ENCODE measurements at regions of chr2 and their contacts with region 1.

Region 1: GRCh38 chr2:222973237-222973636 is 78.8 kb upstream of the KCNE4 start:
- DNase-seq: no peak
- H3K4me3 ChIP-seq: no peak overlapping the region
- H3K27ac ChIP-seq: no peak overlapping the region
- H3K27me3 ChIP-seq: no peaks in the 10 kb centered on the region
- CTCF ChIP-seq: no peak

Region 2: DNA sequence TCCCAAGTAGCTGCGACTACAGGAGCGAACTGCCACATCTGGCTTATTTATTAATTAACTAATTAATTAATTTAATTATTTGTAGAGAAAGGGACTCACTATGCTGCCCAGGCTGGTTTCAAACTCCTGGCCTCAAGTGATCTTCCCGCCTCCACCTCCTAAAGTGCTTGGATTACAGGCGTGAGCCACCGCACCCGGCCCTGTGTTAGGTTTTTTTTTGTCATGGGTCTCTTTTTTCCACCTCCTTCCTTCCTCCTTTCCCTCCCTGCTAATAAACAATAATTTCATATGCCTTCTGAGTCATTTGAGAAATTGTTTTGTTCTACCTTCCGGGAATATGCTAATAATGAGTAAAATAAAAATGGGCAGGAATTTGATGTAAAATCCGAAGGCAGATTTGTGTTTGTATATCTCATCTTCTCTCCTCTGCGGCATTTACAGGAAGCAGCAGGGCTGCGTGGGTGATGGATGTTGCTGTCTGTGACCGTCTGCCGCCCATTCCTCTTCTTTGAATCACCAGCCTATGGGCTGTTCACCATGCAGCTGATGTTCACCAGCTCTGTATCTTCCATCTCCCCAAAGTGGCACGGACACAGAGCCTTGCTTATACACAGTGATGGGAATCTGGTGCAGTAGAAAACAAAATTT is 22.5 kb before region 1 on chr2:
- CTCF ChIA-PET with region 1: interaction called, 14 read pairs
- POLR2A ChIA-PET with region 1: no interaction called
- DNase-seq: peak; percentile 76
- H3K4me3 ChIP-seq: no peak overlapping the region
- H3K27ac ChIP-seq: peak overlapping the region; percentile 75
- H3K27me3 ChIP-seq: no peaks in the 10 kb centered on the region
- CTCF ChIP-seq: no peak

Region 3: GRCh38 chr2:223051693-223052289 is 78.6 kb after region 1 on chr2 and contains the start of gene KCNE4:
- CTCF ChIA-PET with region 1: interaction called, 18 read pairs
- POLR2A ChIA-PET with region 1: interaction called, 5 read pairs
- DNase-seq: no peak
- H3K4me3 ChIP-seq: peak within 1 kb of the TSS; percentile 73
- H3K27ac ChIP-seq: peak within 1 kb of the TSS; percentile 68
- H3K27me3 ChIP-seq: no peaks in the 10 kb centered on the region
- CTCF ChIP-seq: no peak
- polyA plus RNA-seq, gene KCNE4: 10.6 and 12.5 TPM in 2 replicates

Region 4: DNA sequence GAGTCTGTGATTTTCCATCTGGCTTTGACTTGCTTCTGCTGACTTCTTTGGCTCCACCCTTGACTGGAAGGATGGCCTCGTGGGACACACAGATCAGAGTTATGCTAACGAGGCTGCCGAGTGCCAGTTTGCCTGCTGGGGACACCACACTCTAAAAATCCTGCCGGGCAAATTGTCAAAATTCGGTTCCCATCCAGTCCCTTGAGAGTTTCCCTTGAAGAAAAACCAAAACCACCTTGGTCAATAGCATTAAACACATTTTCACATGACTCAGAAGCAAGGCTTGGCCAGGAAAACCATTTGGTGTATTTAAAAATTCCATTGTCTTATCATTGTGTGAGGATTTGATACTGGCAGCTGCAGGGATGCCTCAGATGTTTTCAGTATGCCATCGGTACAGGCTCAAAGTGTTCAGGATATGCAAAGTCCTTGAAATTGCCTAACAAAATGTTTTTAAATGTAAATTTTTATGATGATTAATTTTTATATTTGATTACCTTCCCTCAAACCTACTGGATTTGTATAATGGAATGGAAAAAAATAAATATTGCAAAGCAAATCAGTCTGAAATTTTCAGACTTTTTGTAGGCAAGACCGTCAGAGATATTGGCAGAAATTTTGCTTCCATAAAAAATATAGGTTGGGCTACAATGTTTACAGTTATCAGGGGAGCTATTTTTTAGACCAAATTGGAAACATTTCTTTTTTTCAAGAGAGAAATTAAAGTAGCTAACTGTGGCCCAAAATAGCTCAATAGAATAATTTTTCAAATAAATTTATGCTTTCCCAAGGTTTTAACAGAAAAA is 120.4 kb after region 1 on chr2:
- CTCF ChIA-PET with region 1: interaction called, 63 read pairs
- POLR2A ChIA-PET with region 1: no interaction called
- DNase-seq: peak; percentile 36
- H3K4me3 ChIP-seq: no peak overlapping the region
- H3K27ac ChIP-seq: no peak overlapping the region
- H3K27me3 ChIP-seq: no peaks in the 10 kb centered on the region
- CTCF ChIP-seq: no peak

Region 5: GRCh38 chr2:223148516-223148915 is 175.3 kb after region 1 on chr2:
- CTCF ChIA-PET with region 1: interaction called, 12 read pairs
- POLR2A ChIA-PET with region 1: no interaction called
- DNase-seq: no peak
- H3K4me3 ChIP-seq: no peak overlapping the region
- H3K27ac ChIP-seq: no peak overlapping the region
- H3K27me3 ChIP-seq: no peaks in the 10 kb centered on the region
- CTCF ChIP-seq: no peak

Region 6: DNA sequence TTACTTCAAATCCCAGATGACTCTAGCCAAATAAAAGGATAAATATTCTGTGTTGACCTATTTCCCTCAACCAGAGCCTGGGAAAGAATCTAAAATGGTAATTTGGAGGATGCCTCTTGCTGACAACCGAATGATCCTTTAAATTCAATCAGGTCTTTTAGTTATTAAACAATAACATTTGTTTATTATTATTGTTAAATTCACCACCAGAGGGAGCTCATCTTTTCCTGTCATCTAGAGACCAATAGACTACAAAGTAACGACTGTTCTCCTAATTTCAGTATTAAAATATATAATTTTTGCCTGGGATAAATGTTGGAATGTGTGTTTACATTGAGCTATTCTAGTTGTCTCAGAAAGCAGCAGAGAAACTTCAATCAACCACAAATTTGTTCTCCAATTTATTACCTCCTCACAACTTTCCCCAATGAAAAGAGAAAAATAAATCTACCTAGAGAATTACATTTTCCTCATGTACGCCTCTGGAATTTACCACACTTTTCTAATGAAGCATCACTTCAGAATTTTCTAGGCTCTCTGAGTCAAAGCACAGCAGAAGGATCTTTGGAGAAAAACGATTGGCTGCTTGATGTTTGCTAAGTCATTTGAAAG is 486.2 kb after region 1 on chr2:
- CTCF ChIA-PET with region 1: interaction called, 20 read pairs
- POLR2A ChIA-PET with region 1: no interaction called
- DNase-seq: no peak
- H3K4me3 ChIP-seq: no peak overlapping the region
- H3K27ac ChIP-seq: no peak overlapping the region
- H3K27me3 ChIP-seq: no peaks in the 10 kb centered on the region
- CTCF ChIP-seq: peak; percentile 44

Region 7: DNA sequence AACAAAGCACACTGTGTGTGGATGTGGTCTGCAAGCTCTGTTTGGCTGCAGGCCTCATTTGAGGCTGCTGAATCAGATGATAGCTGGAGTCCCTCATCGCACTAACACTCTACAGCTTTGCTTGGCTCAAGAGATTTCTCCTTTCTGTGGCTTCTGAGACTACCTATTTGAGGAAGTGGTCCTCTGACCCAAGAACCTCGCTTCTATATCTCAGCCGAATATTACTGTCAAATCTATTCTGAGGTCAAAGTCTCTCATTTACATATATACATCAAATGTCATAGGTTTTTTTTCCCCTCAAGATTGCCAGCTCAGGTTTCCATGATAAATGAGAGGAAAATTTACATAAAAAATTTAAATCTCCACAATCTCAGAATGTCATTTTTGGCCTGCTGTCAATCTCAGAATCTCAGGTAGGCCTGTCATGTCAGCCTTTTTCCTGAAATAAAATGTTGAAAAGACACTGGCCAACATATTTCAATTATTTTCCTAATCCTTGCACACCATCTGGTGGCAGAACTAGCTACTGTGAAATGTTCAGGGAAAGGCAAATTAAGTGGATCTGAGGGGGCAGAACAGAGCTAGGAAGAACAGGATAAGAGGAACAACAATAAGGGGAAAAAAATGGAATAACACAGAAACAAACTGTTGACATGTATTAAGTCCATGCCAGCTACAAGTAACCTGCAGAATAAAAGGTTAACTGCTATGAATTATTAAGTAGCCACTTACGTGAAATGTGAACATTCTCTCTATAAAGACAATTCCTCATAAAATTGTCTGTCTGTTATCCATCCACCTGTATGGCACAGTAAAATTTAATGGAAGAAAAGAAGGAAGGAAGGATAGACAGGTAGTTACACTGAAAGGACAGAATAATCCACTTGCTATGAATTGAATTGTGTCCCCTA is 824.8 kb after region 1 on chr2:
- CTCF ChIA-PET with region 1: interaction called, 21 read pairs
- POLR2A ChIA-PET with region 1: interaction called, 3 read pairs
- DNase-seq: no peak
- H3K4me3 ChIP-seq: no peak overlapping the region
- H3K27ac ChIP-seq: no peak overlapping the region
- H3K27me3 ChIP-seq: no peaks in the 10 kb centered on the region
- CTCF ChIP-seq: peak; percentile 78